HepG2 (cell line): ENCODE measurements at regions of chr6 and their contacts with region 1.

Region 1: DNA sequence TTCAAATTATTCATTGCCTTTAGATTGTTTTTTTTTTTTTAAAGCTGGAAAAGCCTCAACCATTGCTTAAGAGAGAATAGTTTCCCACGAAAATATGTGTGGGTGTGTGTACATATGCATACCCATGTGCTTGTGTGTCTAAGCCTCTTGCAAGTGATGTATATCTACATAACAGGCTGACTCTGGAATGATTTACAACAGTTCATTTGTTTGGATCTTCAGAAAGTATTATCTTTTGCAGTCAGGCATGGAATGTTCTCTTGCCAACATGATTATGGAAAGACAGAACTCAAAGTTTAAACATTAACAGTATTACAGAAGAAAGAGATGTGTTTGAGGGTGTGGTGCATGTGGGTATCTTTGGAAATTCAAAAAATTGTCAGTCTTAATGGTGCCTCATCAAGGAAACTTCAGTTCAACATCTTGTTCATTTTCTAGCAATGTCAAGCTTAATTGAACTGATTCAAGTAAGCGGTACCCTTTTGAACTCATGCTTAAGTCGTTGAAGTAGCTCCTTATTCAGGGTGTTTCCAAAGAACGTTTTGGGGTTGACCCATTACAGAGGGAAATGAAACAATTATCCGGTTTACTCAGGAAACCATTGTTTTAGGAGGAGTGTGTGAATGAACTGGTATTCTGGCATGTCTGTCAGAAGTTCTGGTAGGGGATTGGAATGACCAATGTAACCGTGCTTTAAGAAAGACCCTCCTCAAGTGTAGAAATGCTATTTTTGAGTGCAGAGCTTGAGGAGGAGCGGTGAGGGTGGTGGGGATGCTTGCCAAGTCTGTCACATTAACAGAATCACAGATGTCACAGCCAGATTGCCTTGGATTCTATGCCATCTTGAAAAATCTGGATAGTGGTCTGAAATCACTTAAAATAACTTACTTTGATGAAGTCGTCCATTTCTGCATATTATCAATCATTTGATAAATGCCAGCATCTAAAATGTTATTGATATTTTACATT is 60.3 kb downstream of the ADGRG6 start:
- DNase-seq: peak; percentile 94
- ATAC-seq: peak; percentile 88
- H3K4me3 ChIP-seq: no peak overlapping the region
- H3K27ac ChIP-seq: peak overlapping the region; percentile 13
- H3K4me1 ChIP-seq: peaks cover 53% of the 10 kb centered on the region
- H3K27me3 ChIP-seq: no peaks in the 10 kb centered on the region
- CTCF ChIP-seq: no peak
- EP300 ChIP-seq: peak in 1 of 2 experiments; percentile 51; a peak in 1 of 4 replicates
- POLR2A ChIP-seq: no peak
- RAD21 ChIP-seq: no peak

Region 2: DNA sequence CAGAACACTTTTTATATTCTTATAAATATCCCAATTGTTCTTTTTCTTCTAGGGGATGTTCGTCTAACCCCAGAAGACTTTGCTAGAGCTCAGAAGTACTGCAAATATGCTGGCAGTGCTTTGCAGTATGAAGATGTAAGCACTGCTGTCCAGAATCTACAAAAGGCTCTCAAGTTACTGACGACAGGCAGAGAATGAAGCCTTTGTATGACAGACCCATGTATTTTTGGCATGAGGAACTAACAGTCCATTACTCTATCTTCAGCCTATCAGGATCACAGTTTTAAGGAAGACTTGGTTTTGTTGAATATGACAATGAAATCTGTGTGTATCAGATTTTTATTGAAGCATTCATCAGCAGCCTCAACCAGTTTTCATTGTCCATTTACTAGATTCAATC is 143.6 kb before region 1 on chr6:
- CTCF ChIA-PET with region 1: no interaction called
- POLR2A ChIA-PET with region 1: no interaction called
- in situ Hi-C with region 1: no loop called
- intact Hi-C with region 1: no loop called
- DNase-seq: no peak
- ATAC-seq: no peak
- H3K4me3 ChIP-seq: no peak overlapping the region
- H3K27ac ChIP-seq: no peak overlapping the region
- H3K4me1 ChIP-seq: no peaks in the 10 kb centered on the region
- H3K27me3 ChIP-seq: no peaks in the 10 kb centered on the region
- CTCF ChIP-seq: no peak
- EP300 ChIP-seq: no peak
- POLR2A ChIP-seq: no peak
- RAD21 ChIP-seq: no peak

Region 3: DNA sequence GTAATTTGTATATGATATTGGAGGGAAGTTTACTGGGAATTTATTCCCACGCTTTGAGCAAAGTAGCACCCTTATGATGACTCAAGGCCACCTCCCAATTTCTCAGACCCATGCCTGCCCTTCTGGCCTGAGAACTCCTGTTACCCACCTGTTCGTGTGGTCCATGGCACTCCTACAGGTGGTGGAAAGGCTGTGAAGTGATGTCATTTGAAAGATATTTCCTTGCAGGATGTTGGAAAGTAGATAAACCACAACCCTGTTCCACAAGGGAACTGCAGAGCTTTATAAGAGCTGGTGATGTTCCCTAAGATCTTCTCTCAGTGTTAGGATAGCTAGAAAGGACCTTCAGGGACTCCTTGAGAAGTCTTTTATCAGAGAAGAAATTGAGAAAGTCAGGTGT is 10.3 kb after region 1 on chr6:
- CTCF ChIA-PET with region 1: no interaction called
- POLR2A ChIA-PET with region 1: interaction called, 10 read pairs
- in situ Hi-C with region 1: no loop called
- intact Hi-C with region 1: loop called (anchors 2 kb)
- DNase-seq: no peak
- ATAC-seq: no peak
- H3K4me3 ChIP-seq: no peak overlapping the region
- H3K27ac ChIP-seq: peak overlapping the region; percentile 74
- H3K4me1 ChIP-seq: peaks cover 66% of the 10 kb centered on the region
- H3K27me3 ChIP-seq: no peaks in the 10 kb centered on the region
- CTCF ChIP-seq: no peak
- EP300 ChIP-seq: no peak
- POLR2A ChIP-seq: no peak
- RAD21 ChIP-seq: no peak